Caco-2 (cell line): ENCODE measurements at regions of chr14 and their contacts with region 1.

Region 1: DNA sequence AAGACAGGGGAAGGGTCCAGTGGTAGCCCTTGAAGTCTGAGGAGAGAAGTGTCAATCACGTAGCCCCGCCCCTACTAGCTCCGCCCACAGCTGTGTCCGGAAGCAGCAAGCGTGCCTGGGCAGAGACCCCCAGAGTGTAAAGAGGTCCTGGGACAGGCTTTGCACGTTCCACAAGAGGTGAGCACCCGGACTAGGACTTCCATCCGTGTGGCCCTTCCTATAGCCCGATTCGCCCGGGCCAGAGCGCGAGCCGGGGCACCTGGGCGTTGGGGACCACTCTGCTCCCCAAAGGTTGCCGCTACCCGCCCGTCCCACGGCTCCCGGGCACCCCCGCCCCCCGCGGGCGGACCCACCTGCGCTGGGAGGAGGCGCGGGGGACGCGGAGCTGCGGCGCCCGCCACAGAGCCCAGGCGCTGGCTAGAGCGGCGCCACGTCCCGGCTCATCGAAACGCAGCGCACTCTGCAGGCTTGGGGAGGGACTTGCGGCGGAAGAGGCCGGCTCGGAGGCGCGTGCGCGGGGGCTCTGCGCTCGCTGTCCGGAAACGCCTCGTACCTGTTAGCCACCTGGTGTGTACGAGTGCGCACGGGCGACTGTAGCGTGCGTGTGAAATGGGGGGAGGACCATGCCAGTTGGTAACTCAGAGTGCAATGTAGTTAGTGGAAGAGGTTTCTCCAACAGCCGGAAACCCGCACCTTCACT is at the start of gene RABGGTA:
- DNase-seq: peak; percentile 91 to 93
- H3K4me3 ChIP-seq: peak within 1 kb of the TSS; percentile 95
- H3K4me3 Mint-ChIP-seq: peak within 1 kb of the TSS; percentile 76
- H3K27ac Mint-ChIP-seq: peak within 1 kb of the TSS; percentile 74
- H3K4me1 ChIP-seq: peaks cover 5% of the 10 kb centered on the region
- H3K4me1 Mint-ChIP-seq: peaks cover 11% of the 10 kb centered on the region
- H3K27me3 ChIP-seq: no peaks in the 10 kb centered on the region
- H3K27me3 Mint-ChIP-seq: no peaks in the 10 kb centered on the region
- CTCF ChIP-seq: peak; percentile 65 to 82
- total RNA-seq, gene RABGGTA: 27.1 and 30.4 TPM in 2 replicates

Region 2: GRCh38 chr14:24228902-24229301 is 42.4 kb before region 1 on chr14:
- CTCF ChIA-PET with region 1: no interaction called
- POLR2A ChIA-PET with region 1: no interaction called
- intact Hi-C with region 1: no loop called
- DNase-seq: no peak
- H3K4me3 ChIP-seq: no peak overlapping the region
- H3K4me3 Mint-ChIP-seq: no peak overlapping the region
- H3K27ac Mint-ChIP-seq: no peak overlapping the region
- H3K4me1 ChIP-seq: no peaks in the 10 kb centered on the region
- H3K4me1 Mint-ChIP-seq: peaks cover 6% of the 10 kb centered on the region
- H3K27me3 ChIP-seq: no peaks in the 10 kb centered on the region
- H3K27me3 Mint-ChIP-seq: no peaks in the 10 kb centered on the region
- CTCF ChIP-seq: no peak

Region 3: DNA sequence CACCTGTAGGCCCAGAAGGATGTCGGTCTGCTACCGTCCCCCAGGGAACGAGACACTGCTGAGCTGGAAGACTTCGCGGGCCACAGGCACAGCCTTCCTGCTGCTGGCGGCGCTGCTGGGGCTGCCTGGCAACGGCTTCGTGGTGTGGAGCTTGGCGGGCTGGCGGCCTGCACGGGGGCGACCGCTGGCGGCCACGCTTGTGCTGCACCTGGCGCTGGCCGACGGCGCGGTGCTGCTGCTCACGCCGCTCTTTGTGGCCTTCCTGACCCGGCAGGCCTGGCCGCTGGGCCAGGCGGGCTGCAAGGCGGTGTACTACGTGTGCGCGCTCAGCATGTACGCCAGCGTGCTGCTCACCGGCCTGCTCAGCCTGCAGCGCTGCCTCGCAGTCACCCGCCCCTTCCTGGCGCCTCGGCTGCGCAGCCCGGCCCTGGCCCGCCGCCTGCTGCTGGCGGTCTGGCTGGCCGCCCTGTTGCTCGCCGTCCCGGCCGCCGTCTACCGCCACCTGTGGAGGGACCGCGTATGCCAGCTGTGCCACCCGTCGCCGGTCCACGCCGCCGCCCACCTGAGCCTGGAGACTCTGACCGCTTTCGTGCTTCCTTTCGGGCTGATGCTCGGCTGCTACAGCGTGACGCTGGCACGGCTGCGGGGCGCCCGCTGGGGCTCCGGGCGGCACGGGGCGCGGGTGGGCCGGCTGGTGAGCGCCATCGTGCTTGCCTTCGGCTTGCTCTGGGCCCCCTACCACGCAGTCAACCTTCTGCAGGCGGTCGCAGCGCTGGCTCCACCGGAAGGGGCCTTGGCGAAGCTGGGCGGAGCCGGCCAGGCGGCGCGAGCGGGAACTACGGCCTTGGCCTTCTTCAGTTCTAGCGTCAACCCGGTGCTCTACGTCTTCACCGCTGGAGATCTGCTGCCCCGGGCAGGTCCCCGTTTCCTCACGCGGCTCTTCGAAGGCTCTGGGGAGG is 39.6 kb after region 1 on chr14 and contains the start of gene LTB4R:
- CTCF ChIA-PET with region 1: interaction called, 5 read pairs
- POLR2A ChIA-PET with region 1: interaction called, 3 read pairs
- intact Hi-C with region 1: loop called (anchors 1 kb)
- DNase-seq: no peak
- H3K4me3 ChIP-seq: no peak within 1 kb of the TSS
- H3K4me3 Mint-ChIP-seq: no peak within 1 kb of the TSS
- H3K27ac Mint-ChIP-seq: no peak within 1 kb of the TSS
- H3K4me1 ChIP-seq: peaks cover 25% of the 10 kb centered on the region
- H3K4me1 Mint-ChIP-seq: peaks cover 27% of the 10 kb centered on the region
- H3K27me3 ChIP-seq: no peaks in the 10 kb centered on the region
- H3K27me3 Mint-ChIP-seq: no peaks in the 10 kb centered on the region
- CTCF ChIP-seq: no peak
- total RNA-seq, gene LTB4R: 7.3 and 7.8 TPM in 2 replicates